Common myeloid progenitor, CD34-positive (primary cell): ENCODE measurements at regions of chr10 and their contacts with region 1.

Region 1: DNA sequence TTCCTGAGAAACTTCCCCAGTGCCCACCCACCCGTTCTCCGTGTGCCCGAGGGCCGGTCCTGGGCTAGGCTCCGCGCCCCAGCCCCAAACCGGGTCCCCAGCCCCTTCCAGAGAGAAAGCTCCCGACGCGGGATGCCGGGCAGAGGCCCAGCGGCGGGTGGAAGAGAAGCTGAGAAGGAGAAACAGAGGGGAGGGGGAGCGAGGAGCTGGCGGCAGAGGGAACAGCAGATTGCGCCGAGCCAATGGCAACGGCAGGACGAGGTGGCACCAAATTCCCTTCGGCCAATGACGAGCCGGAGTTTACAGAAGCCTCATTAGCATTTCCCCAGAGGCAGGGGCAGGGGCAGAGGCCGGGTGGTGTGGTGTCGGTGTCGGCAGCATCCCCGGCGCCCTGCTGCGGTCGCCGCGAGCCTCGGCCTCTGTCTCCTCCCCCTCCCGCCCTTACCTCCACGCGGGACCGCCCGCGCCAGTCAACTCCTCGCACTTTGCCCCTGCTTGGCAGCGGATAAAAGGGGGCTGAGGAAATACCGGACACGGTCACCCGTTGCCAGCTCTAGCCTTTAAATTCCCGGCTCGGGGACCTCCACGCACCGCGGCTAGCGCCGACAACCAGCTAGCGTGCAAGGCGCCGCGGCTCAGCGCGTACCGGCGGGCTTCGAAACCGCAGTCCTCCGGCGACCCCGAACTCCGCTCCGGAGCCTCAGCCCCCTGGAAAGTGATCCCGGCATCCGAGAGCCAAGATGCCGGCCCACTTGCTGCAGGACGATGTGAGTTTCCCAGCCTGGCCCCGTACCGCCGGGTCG is at the start of gene SCD:
- DNase-seq: peak; percentile 89 to 95 (median 94)
- H3K4me3 ChIP-seq: peak within 1 kb of the TSS; percentile 64 to 92 (median 80)
- H3K27ac ChIP-seq: peak within 1 kb of the TSS in 1 of 2 experiments; percentile 69
- H3K4me1 ChIP-seq: peaks cover 8 to 50% (median 26%) of the 10 kb centered on the region in 4 experiments
- H3K27me3 ChIP-seq: no peaks in the 10 kb centered on the region

Region 2: GRCh38 chr10:99966306-99966705 is 380.7 kb before region 1 on chr10:
- CTCF ChIA-PET with region 1: no interaction called
- POLR2A ChIA-PET with region 1: no interaction called
- DNase-seq: no peak
- H3K4me3 ChIP-seq: no peak overlapping the region
- H3K27ac ChIP-seq: no peak overlapping the region
- H3K4me1 ChIP-seq: no peaks in the 10 kb centered on the region
- H3K27me3 ChIP-seq: no peaks in the 10 kb centered on the region

Region 3: DNA sequence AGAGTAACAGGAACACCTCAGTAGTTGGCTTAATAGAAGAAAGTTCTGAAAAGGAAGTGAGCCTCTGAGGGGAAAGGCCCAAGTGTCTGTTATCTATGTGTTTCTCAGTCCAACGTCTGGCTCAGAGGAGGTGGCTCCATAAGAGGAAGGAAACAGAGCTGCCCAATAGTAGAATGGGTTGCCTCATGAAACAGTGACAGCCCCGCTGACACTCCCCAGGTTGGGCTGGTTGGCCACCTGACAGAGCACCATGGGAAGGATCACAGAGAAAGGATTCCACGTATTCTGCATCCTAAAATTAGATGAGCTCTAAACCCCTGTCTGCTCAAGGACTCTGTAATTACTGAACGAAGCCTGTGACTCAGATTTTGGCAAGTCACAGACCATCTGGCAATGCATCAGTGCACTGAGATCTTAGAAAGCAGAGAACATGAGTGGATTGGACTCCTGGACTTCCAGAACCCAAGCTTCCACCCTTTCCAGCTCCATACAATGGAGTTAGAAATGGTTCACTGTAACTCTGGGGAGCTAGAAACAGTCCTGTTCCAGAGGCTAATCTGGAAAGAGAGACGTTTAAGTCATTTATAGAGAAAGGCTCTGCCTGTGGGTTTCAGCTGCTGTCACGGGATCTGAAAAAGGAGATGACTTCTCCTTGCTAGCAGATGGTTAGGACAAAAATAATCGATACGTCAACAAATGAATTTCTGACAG is 19.8 kb before region 1 on chr10:
- CTCF ChIA-PET with region 1: interaction called, 74 read pairs
- POLR2A ChIA-PET with region 1: no interaction called
- DNase-seq: peak; percentile 49 to 90 (median 87)
- H3K4me3 ChIP-seq: no peak overlapping the region
- H3K27ac ChIP-seq: no peak overlapping the region
- H3K4me1 ChIP-seq: peaks cover 10 to 19% (median 12%) of the 10 kb centered on the region in 4 experiments
- H3K27me3 ChIP-seq: no peaks in the 10 kb centered on the region

Region 4: DNA sequence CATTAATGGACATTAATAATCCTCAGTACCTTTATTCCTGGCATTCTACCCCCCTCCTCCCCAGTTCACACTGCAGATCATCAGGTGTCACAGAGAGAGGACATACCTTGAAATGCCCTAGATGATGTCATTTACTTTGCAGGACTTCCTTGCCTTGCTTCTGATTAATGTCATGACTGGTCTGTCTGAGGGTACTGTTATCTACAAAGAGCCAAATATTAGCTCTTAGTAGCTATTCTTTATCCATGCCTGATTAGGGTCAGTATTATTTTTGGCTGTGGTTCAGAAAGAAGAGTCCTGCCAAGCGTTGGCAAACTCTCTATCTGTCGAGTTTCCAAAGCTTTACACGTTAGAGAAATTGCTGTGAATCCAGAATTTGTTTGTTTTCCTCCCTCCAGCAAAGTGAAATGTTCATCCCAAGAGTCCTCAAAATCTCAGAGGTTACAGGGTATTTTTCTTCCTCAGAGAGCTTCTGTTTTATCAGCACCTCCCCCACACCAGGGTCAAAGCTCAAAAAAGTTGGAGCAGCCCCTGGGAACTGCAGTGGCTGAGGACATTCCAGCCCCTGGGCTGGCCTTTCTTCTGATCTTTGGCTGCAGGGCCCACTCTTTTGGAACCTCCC is 12.7 kb after region 1 on chr10:
- CTCF ChIA-PET with region 1: interaction called, 19 read pairs
- POLR2A ChIA-PET with region 1: interaction called, 3 read pairs
- DNase-seq: no peak
- H3K4me3 ChIP-seq: no peak overlapping the region
- H3K27ac ChIP-seq: no peak overlapping the region
- H3K4me1 ChIP-seq: peaks cover 0 to 8% (median 2%) of the 10 kb centered on the region in 4 experiments
- H3K27me3 ChIP-seq: no peaks in the 10 kb centered on the region

Region 5: GRCh38 chr10:100364735-100365391 is 17.9 kb after region 1 on chr10:
- CTCF ChIA-PET with region 1: interaction called, 34 read pairs
- POLR2A ChIA-PET with region 1: interaction called, 15 read pairs
- DNase-seq: peak; percentile 29 to 72 (median 63)
- H3K4me3 ChIP-seq: no peak overlapping the region
- H3K27ac ChIP-seq: no peak overlapping the region
- H3K4me1 ChIP-seq: peaks cover 3 to 23% (median 11%) of the 10 kb centered on the region in 4 experiments
- H3K27me3 ChIP-seq: no peaks in the 10 kb centered on the region

Region 6: DNA sequence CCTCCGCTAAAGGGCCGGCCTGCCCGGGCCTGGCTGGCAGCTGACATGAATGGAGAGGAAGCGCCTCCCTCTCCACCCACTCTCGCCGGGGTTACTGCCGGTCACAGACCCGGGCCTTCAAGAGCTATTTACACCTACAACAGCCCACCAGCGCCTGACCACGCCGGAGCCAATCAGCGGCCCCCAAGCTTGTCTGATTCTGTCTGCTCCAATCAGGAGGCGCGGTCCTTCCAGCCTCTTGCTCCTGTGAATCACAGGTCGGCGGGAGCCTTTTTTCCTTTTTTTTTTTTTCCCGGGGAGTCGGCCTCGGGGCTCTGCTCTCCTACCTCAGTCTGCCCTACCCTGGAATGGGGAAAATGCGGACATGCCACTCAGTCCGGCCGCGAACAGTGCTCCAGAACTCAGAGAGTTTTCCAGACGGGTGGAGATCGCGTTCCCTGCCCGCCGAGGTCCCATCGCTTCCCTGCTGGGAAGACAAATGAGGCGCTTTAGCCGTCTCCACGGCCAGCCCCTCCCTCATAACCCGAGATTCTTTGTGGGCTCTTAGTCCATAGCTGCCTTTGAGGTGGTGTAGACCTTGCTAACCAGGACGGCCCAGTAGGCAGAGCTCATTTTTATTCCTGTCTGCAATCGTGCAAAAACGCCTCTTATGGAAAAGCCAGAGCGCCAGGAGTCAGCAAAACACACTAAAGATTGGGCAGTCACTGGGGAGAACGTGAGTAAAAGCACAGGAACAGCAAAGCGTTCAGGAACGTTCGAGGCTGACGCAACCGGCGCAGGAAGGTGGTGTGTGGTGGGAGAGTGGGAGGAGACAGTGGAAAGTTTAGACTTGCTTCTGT is 26.6 kb after region 1 on chr10:
- CTCF ChIA-PET with region 1: interaction called, 34 read pairs
- POLR2A ChIA-PET with region 1: interaction called, 30 read pairs
- DNase-seq: peak; percentile 90 to 93 (median 92)
- H3K4me3 ChIP-seq: peak overlapping the region; percentile 39 to 91 (median 78)
- H3K27ac ChIP-seq: peak overlapping the region; percentile 91 to 95
- H3K4me1 ChIP-seq: peaks cover 14 to 72% (median 51%) of the 10 kb centered on the region in 4 experiments
- H3K27me3 ChIP-seq: no peaks in the 10 kb centered on the region

Region 7: DNA sequence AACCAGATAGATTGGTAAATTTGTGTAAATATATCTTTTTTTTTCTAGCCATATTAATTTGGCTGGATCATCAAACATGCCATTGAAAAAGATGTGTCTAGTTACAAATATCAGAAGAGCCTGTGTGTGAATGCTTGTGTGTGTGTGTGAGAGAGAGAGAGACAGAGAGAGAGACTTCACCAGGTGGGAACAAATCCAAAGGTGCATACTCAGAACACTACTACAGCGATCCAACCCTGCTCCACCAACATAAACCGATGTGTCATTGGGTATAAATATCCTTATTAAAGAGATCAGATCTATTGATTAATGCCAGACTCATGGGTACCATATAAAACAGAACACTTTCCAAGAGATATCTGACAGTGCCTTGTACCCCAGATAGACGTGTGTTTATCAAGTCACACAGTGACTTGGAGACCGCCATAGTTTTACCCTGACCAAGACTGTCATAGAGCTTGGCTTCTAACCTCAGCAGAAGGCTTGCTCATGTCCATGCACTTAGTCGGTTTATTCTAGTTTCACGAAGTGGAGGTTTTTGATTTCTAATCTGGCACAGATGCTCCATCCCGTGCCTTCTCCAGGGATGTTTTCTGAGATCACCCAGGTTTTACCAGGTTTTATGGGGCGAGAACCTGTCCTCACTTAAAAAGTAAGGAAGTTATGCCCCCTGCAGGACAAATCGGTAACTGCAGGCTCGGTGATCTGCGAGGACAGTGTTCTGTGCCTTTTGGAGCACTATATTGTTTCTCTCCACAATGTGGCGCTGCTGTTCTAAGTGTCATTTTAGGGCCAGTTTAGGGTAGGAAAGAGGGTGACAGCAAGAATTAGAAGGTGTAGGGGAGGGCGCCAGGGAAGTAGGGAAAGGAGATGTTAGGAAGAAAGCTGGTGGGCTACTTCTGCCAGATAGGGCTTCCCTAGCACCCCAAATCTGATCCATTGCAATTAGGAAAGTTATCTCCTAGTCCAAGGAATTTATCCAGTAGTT is 86.6 kb after region 1 on chr10:
- CTCF ChIA-PET with region 1: interaction called, 247 read pairs
- POLR2A ChIA-PET with region 1: interaction called, 6 read pairs
- DNase-seq: peak; percentile 91 to 97 (median 92)
- H3K4me3 ChIP-seq: no peak overlapping the region
- H3K27ac ChIP-seq: no peak overlapping the region
- H3K4me1 ChIP-seq: no peaks in the 10 kb centered on the region
- H3K27me3 ChIP-seq: no peaks in the 10 kb centered on the region